Activated CD4-positive, alpha-beta T cell treated with anti-CD3 and anti-CD28 coated beads for 36 hours (primary cell): ENCODE measurements at regions of chr1 and their contacts with region 1.

Region 1: GRCh38 chr1:64759968-64760367 is 15.1 kb downstream of the RAVER2 start:
- DNase-seq: no peak
- ATAC-seq: no peak
- H3K4me3 Mint-ChIP-seq: no peak overlapping the region
- H3K27ac Mint-ChIP-seq: no peak overlapping the region
- H3K4me1 Mint-ChIP-seq: no peaks in the 10 kb centered on the region
- H3K27me3 Mint-ChIP-seq: no peaks in the 10 kb centered on the region

Region 2: DNA sequence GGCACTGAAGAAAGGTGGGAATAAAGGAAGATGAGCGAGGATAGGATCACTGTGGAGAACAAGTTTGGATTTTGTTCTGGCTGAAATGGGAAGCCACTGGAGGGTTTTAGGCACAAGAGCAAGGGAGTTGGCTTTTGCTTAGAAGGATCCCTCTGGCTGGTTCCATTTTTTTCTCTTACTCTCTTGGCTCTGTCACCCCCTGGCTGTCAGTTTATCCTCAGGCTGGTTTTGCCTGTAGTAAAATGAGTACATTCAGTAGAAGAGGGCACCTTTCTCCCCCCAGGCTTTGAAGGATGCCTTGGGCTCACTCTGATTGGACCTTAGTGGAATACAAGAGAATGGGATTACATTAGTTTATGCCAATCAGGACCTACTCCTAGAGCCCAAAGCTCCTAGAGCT is 272.9 kb before region 1 on chr1:
- CTCF ChIA-PET with region 1: no interaction called
- POLR2A ChIA-PET with region 1: no interaction called
- intact Hi-C with region 1: loop called in 1 of 2 experiments (anchors 5 kb)
- DNase-seq: no peak
- ATAC-seq: no peak
- H3K4me3 Mint-ChIP-seq: no peak overlapping the region
- H3K27ac Mint-ChIP-seq: no peak overlapping the region
- H3K4me1 Mint-ChIP-seq: peaks cover 15% of the 10 kb centered on the region
- H3K27me3 Mint-ChIP-seq: peaks cover 6% of the 10 kb centered on the region